ENCODE measurements at regions of chr4 and their contacts with region 1.

Region 1: DNA sequence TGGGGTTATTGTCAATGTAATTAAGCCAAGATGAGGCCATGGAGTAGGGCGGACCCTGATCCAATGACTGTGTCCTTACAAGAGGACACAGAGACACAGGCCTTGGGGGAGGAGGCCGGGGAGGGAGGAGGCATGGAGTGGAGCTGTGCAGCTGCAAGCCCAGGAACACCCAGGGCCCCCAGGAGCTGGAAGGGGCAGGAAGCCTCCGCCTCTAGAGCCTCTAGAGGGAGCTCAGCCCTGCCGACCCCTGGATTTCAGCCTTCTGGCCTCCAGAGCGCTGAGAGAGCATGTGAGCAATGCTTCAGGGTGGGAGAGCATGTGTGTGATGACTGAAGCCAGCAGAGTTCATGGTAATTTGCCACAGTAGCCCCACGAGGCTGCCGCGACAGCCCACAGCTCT is 234.6 kb downstream of the AFAP1 start:
- DNase-seq: peak in 4 of 5 donors; percentile 29 to 65 (median 44)
- ATAC-seq: peak in 3 of 4 donors; percentile 16 to 64 (median 39)
- H3K4me3 ChIP-seq: no peak overlapping the region
- H3K27ac ChIP-seq: no peak overlapping the region
- H3K4me1 ChIP-seq: peaks cover 0 to 3% (median 0%) of the 10 kb centered on the region in 12 donors
- H3K27me3 ChIP-seq: peaks cover 0 to 8% (median 0%) of the 10 kb centered on the region in 9 donors
- CTCF ChIP-seq: peak in 1 of 12 donors; percentile 8
- POLR2A ChIP-seq: no peak

Region 2: GRCh38 chr4:7472442-7473013 is 232.5 kb before region 1 on chr4:
- intact Hi-C with region 1: loop called in 1 of 10 experiments (anchors 5 kb)
- DNase-seq: no peak
- ATAC-seq: no peak
- H3K4me3 ChIP-seq: no peak overlapping the region
- H3K27ac ChIP-seq: no peak overlapping the region
- H3K4me1 ChIP-seq: no peaks in the 10 kb centered on the region
- H3K27me3 ChIP-seq: peaks cover 0 to 8% (median 0%) of the 10 kb centered on the region in 9 donors
- CTCF ChIP-seq: no peak
- POLR2A ChIP-seq: no peak

Measured in heart left ventricle (tissue), 16 donors.